Breast epithelium (tissue), 4 donors: ENCODE measurements at regions of chr12 and their contacts with region 1.

Region 1: DNA sequence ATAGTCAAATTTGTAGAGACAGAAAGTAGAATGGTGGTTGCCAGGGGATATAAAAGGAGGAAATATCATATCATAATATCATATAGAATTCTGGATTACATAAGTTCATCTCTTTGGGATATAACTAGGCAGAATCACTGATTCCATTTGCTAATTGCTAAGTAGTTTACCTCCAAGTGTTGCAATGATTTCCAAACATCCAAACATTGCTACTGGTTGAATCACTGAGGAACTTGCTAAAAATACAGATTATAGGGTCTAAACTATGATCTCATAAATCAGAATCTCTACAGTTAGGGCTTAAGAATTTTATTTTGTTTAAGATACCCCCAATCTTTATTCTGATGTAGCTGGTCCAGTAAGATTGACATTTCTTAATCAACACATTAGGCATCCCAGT is 16.1 kb upstream of the TAS2R42 start:
- DNase-seq: no peak
- H3K4me3 ChIP-seq: no peak overlapping the region
- H3K27ac ChIP-seq: no peak overlapping the region
- H3K4me1 ChIP-seq: no peaks in the 10 kb centered on the region
- H3K27me3 ChIP-seq: no peaks in the 10 kb centered on the region
- CTCF ChIP-seq: no peak
- POLR2A ChIP-seq: no peak

Region 2: GRCh38 chr12:11477110-11477509 is 274.3 kb after region 1 on chr12:
- intact Hi-C with region 1: loop called (anchors 5 kb)
- DNase-seq: no peak
- H3K4me3 ChIP-seq: no peak overlapping the region
- H3K27ac ChIP-seq: no peak overlapping the region
- H3K4me1 ChIP-seq: no peaks in the 10 kb centered on the region
- H3K27me3 ChIP-seq: no peaks in the 10 kb centered on the region
- CTCF ChIP-seq: no peak
- POLR2A ChIP-seq: no peak